ENCODE measurements at regions of chr15 and their contacts with region 1.

Region 1: DNA sequence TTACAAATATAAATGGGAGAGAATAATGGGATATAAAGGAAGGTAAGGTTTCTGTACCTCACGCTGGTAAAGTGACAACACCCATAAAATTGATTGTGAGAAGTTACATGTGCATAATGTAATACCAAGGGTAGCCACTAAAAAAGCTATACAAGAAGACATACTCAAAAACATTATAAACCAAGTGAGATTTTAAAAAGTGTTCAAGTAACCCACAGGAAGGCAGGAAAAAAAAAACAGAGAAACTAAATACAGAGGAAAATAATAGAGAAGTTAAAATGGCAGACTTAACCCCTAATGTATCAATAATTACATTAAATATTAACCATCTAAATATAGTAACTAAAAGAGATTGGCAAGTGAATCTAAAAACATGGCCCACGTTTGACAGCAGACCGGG is 76.3 kb downstream of the PCSK6 start:
- DNase-seq: no peak
- H3K4me3 ChIP-seq: no peak overlapping the region
- CTCF ChIP-seq: no peak
- POLR2A ChIP-seq: no peak

Region 2: GRCh38 chr15:101357331-101357730 is 55.9 kb before region 1 on chr15:
- intact Hi-C with region 1: loop called (anchors 1 kb)
- DNase-seq: no peak
- H3K4me3 ChIP-seq: no peak overlapping the region
- CTCF ChIP-seq: no peak
- POLR2A ChIP-seq: no peak

Region 3: DNA sequence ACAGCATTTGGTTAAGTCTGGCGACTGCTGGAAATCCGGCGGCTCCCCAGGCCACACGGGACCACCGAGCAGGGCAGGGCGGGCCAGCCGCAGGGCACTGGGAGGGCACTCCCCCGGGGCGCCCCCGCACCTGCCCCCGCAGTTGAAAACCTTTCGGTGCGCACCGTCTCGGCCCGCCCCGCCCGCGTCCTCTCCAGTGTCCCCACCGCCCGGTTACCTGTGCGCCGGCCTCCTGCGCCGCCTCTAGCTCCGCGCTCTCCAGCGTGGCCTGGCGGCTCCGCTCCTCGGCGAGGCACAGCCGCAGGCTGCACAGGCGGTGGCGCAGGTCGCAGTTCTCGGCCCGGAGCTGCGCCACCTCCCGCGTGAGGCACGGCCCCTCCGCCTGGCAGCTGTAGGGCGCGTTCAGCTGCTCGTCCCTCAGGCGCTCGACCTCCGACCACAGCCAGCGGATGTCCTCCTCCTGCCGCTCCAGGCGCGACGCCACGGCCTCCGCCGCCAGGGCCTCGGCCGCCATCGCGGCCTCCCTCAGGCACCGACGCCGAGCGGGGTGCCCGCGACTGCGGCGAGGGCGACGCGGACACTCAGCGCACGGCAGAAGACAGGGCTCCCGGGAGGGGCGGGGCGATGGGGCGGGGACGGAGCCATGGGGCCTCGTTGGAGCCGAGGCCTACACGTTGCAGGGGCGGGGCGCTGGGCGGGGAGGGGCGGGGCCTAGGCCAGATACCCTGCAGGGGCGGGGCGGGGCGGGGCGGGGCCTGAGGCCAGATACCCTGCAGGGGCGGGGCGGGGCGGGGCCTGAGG is 310.8 kb after region 1 on chr15 and contains the start of gene TARS3:
- intact Hi-C with region 1: no loop called
- DNase-seq: peak; percentile 93 to 99
- H3K4me3 ChIP-seq: peak within 1 kb of the TSS; percentile 49
- CTCF ChIP-seq: no peak
- POLR2A ChIP-seq: no peak
- total RNA-seq, gene TARS3: 6.2 to 11.3 (median 9.6) TPM

Measured in lower leg skin (tissue), 4 donors.